MCF 10A (cell line): ENCODE measurements at regions of chr4 and their contacts with region 1.

Region 1: DNA sequence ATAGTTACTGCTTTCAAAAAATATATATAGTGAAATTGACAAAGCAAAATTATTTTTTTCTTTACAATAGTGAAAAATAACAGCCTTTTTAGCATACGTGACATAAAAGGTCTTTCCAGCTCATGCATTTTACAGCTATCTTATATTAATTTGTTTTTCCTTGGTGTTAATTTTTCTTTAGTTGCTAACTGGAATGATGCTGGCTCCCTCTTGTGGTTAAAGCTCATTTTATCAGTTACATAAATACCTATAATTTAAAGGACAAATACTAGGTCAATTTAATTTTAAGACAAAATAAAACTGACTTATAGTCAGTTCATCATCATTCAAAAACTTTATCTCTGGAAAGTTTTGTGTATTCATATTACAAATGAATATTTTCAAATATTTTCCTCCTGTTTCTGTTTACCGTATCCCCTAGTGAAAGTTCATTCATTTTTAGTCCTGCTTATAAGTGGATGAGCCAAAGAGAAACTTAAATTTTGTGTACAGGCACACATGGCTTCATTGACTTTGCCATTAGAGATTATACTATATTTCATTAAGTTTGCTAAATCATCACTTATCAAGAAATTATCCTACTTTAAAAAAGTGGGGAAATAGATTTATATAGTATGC is 9.9 kb upstream of the ANAPC4 start:
- DNase-seq: peak; percentile 58
- H3K4me3 Mint-ChIP-seq: no peak overlapping the region
- H3K27ac Mint-ChIP-seq: no peak overlapping the region
- H3K4me1 Mint-ChIP-seq: no peaks in the 10 kb centered on the region
- H3K27me3 Mint-ChIP-seq: no peaks in the 10 kb centered on the region
- CTCF ChIP-seq: peak; percentile 59

Region 2: GRCh38 chr4:24488399-24489164 is 878.5 kb before region 1 on chr4:
- CTCF ChIA-PET with region 1: no interaction called
- POLR2A ChIA-PET with region 1: no interaction called
- intact Hi-C with region 1: loop called (anchors 10 kb)
- DNase-seq: peak; percentile 65
- H3K4me3 Mint-ChIP-seq: no peak overlapping the region
- H3K27ac Mint-ChIP-seq: no peak overlapping the region
- H3K4me1 Mint-ChIP-seq: no peaks in the 10 kb centered on the region
- H3K27me3 Mint-ChIP-seq: peaks cover 13% of the 10 kb centered on the region
- CTCF ChIP-seq: peak; percentile 85

Region 3: DNA sequence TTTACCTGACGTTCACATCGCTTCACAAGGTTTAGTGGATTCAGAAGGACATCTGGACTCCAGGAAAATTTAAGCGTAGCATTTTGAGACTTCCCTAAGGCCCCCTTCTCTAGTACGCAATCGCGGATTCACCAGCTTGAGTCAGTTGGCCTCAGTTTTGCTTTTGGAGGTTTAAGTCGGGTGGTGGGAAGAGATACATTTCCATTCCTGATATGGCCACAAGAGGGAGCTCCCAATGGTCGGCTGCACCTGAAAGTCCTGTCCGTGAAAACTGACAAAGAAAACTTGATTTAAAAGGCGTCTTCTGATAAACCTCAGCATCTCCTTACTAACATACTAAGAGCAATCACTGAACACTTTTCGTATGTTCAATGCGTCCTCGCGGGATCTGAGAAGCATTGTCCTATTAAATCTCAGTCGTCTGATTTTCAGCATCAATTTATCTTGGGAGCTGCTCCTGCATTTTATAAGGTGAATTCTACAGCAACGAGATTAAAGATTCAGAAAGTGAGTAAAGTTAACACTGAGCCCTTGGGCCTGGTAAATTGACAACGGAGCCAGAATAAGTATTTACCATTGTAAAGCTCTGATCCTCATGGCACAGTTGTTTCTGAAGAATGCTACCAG is 386.9 kb before region 1 on chr4:
- CTCF ChIA-PET with region 1: interaction called, 12 read pairs
- POLR2A ChIA-PET with region 1: no interaction called
- intact Hi-C with region 1: loop called (anchors 1 kb)
- DNase-seq: peak; percentile 73
- H3K4me3 Mint-ChIP-seq: no peak overlapping the region
- H3K27ac Mint-ChIP-seq: no peak overlapping the region
- H3K4me1 Mint-ChIP-seq: peaks cover 13% of the 10 kb centered on the region
- H3K27me3 Mint-ChIP-seq: peaks cover 5% of the 10 kb centered on the region
- CTCF ChIP-seq: peak; percentile 81

Region 4: GRCh38 chr4:25159884-25160713 is 207.0 kb before region 1 on chr4 and contains the start of gene SEPSECS:
- CTCF ChIA-PET with region 1: interaction called, 5 read pairs
- POLR2A ChIA-PET with region 1: interaction called, 23 read pairs
- intact Hi-C with region 1: no loop called
- DNase-seq: peak; percentile 98
- H3K4me3 Mint-ChIP-seq: peak within 1 kb of the TSS; percentile 93
- H3K27ac Mint-ChIP-seq: peak within 1 kb of the TSS; percentile 87
- H3K4me1 Mint-ChIP-seq: peaks cover 17% of the 10 kb centered on the region
- H3K27me3 Mint-ChIP-seq: no peaks in the 10 kb centered on the region
- CTCF ChIP-seq: no peak
- total RNA-seq, gene SEPSECS: 9.4 and 9.7 TPM in 2 replicates

Region 5: DNA sequence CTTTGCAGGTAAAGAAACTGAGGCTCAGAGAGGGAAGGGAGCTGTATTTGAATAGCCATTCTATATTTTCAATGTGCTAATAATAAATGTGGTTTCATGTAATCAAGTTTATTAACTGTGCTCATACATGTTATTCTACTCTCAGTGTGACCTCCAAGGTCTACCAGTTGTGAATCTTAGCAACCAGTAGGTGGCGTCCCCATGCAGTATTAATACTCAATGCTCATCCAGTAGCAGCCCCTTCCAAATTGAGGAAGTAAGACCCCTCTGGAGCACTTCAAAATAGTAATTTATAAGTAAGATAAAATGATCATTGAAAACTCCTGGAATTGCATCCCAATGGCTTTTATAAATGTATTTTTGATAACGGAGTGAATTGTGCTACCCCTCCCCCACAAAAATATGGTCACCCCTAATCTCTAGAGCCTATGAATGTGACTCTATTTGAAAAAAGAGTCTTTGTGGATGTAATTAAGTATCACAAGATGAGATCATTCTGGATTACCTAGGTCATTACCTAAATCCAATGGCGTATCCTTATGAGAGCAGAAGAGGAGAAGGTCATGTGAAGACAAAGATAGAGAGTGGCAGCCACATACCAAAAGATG is 186.5 kb before region 1 on chr4:
- CTCF ChIA-PET with region 1: interaction called, 42 read pairs
- POLR2A ChIA-PET with region 1: no interaction called
- intact Hi-C with region 1: loop called (anchors 1 kb)
- DNase-seq: peak; percentile 64
- H3K4me3 Mint-ChIP-seq: no peak overlapping the region
- H3K27ac Mint-ChIP-seq: no peak overlapping the region
- H3K4me1 Mint-ChIP-seq: no peaks in the 10 kb centered on the region
- H3K27me3 Mint-ChIP-seq: no peaks in the 10 kb centered on the region
- CTCF ChIP-seq: peak; percentile 62

Region 6: DNA sequence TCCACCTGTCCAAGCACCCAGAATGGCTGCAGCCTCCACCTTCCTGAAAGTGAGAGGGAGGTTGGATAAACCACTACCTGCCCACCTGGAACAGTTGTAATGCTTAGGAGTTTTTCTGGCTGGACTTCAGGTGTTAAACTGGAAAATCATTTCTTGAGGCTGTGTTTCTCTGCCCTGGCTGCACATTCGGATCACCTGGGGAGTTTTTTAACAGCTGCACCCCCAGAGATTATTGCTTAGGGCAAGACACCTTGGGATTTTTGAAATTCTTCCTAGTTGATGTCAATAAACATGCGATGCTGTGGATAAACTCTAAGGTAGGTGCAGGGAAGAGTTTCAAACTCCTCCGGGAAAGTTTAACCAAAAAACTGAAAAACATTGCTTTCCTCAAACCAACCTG is 164.7 kb before region 1 on chr4:
- CTCF ChIA-PET with region 1: no interaction called
- POLR2A ChIA-PET with region 1: no interaction called
- intact Hi-C with region 1: no loop called
- DNase-seq: no peak
- H3K4me3 Mint-ChIP-seq: no peak overlapping the region
- H3K27ac Mint-ChIP-seq: no peak overlapping the region
- H3K4me1 Mint-ChIP-seq: no peaks in the 10 kb centered on the region
- H3K27me3 Mint-ChIP-seq: no peaks in the 10 kb centered on the region
- CTCF ChIP-seq: no peak

Region 7: GRCh38 chr4:25234390-25235370 is 132.4 kb before region 1 on chr4:
- CTCF ChIA-PET with region 1: interaction called, 6 read pairs
- POLR2A ChIA-PET with region 1: no interaction called
- intact Hi-C with region 1: loop called (anchors 2 kb)
- DNase-seq: peak; percentile 92
- H3K4me3 Mint-ChIP-seq: peak overlapping the region; percentile 86
- H3K27ac Mint-ChIP-seq: peak overlapping the region; percentile 90
- H3K4me1 Mint-ChIP-seq: peaks cover 10% of the 10 kb centered on the region
- H3K27me3 Mint-ChIP-seq: no peaks in the 10 kb centered on the region
- CTCF ChIP-seq: peak; percentile 44

Region 8: DNA sequence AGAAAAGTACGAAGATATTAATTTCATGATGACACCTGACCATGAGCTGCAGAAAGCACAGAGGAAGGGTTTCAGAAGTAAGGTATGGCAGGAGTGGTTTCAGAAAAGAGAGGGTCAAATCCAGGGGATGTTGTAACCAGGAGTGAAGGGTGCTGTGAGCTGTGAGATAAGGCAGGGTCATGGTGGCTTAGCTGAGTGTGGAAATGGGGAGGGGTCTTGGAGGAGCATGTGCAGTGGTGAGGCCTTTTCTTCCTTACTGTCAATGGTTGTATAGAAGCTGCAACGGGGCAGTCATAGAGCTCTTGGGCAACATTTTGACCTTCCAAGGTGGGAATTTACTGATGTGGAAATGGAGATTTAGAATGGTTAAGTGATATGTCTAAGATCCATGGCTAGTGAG is 12.5 kb after region 1 on chr4:
- CTCF ChIA-PET with region 1: interaction called, 13 read pairs
- POLR2A ChIA-PET with region 1: interaction called, 6 read pairs
- intact Hi-C with region 1: no loop called
- DNase-seq: no peak
- H3K4me3 Mint-ChIP-seq: no peak overlapping the region
- H3K27ac Mint-ChIP-seq: no peak overlapping the region
- H3K4me1 Mint-ChIP-seq: no peaks in the 10 kb centered on the region
- H3K27me3 Mint-ChIP-seq: no peaks in the 10 kb centered on the region
- CTCF ChIP-seq: no peak